Activated CD8-positive, alpha-beta memory T cell treated with anti-CD3 and anti-CD28 coated beads, Interleukin-2, amount 10 ng/mL, durations not matched to agents 7 days and 5 days (primary cell): ENCODE measurements at regions of chr9 and their contacts with region 1.

Region 1: DNA sequence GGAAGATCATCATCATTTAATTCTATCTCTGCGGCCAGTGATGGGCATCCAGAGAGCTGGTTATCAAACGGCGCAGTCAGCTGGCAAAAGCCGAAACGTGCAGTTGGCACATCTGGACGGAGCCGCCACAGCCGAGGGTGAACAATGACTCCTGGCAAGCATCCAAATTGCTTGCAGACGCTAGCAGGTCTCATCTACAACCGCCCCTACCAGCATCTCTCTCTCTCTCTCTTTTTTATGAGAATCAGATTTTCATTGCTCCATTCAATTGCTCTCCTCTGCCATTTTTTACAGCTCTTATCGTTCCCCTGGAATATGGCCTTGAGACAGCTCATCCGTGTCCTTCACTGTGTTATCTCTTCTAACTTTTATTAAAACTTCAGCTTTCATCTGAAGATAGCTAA is 165.2 kb downstream of the MAPKAP1 start:
- DNase-seq: no peak
- ATAC-seq: no peak
- H3K4me3 Mint-ChIP-seq: no peak overlapping the region
- H3K27ac Mint-ChIP-seq: no peak overlapping the region
- H3K4me1 Mint-ChIP-seq: no peaks in the 10 kb centered on the region
- H3K27me3 Mint-ChIP-seq: no peaks in the 10 kb centered on the region

Region 2: DNA sequence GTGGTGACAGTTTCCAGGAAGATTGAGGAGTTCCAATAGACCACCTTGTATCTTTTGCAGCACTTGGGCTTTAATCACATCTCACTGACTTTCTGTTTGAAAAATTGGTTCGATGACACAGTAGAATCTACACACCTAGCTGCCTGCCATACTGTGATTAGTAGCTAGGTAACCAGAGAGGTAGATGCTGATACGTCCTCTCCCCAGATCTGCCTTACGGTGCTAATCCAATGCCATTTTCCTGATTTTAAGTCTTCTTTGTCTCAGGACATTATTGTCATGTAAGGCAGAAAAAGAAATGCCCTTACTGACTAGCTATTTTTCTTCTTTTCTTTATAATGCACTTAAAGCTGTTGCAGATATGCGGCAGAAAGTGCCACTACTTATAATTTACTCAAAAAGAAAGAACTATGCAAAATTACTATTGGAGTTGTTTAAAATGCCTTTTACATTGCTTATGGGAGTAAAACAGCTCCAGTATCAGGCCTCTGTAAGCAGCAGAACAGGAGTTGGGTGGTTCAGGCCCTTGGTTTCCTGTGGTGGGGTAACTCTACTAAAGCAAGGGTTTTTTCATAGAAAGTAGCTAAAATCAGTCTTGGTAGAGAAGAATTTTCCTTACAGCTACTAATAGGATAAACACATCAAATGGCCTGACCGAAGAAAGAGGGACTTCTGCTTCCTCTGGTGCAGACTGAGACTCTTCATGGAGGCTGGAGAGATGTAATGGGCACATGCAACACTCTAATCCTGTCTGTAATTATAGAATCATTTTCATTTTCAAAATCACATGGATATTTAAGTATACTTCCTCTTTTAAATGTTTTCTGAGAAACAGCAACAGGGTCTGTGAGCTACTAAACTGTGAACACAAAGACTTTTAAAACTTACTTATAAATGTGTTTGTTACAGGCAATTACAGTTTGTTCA is 12.0 kb before region 1 on chr9:
- CTCF ChIA-PET with region 1: interaction called, 14 read pairs
- DNase-seq: no peak
- ATAC-seq: peak; percentile 74
- H3K4me3 Mint-ChIP-seq: no peak overlapping the region
- H3K27ac Mint-ChIP-seq: peak overlapping the region; percentile 82
- H3K4me1 Mint-ChIP-seq: peaks cover 33% of the 10 kb centered on the region
- H3K27me3 Mint-ChIP-seq: no peaks in the 10 kb centered on the region